ENCODE measurements at regions of chr9 and their contacts with region 1.

Region 1: GRCh38 chr9:2655411-2655901 is 33.9 kb downstream of the VLDLR start:
- DNase-seq: peak; percentile 40
- H3K4me3 Mint-ChIP-seq: peak overlapping the region; percentile 13
- H3K27ac Mint-ChIP-seq: peak overlapping the region; percentile 91
- H3K4me1 Mint-ChIP-seq: peaks cover 29% of the 10 kb centered on the region
- H3K27me3 Mint-ChIP-seq: no peaks in the 10 kb centered on the region

Region 2: GRCh38 chr9:2023532-2023931 is 631.9 kb before region 1 on chr9:
- intact Hi-C with region 1: loop called (anchors 5 kb)
- DNase-seq: peak; percentile 21
- H3K4me3 Mint-ChIP-seq: peak overlapping the region; percentile 71
- H3K27ac Mint-ChIP-seq: peak overlapping the region; percentile 90
- H3K4me1 Mint-ChIP-seq: peaks cover 93% of the 10 kb centered on the region
- H3K27me3 Mint-ChIP-seq: no peaks in the 10 kb centered on the region

Region 3: DNA sequence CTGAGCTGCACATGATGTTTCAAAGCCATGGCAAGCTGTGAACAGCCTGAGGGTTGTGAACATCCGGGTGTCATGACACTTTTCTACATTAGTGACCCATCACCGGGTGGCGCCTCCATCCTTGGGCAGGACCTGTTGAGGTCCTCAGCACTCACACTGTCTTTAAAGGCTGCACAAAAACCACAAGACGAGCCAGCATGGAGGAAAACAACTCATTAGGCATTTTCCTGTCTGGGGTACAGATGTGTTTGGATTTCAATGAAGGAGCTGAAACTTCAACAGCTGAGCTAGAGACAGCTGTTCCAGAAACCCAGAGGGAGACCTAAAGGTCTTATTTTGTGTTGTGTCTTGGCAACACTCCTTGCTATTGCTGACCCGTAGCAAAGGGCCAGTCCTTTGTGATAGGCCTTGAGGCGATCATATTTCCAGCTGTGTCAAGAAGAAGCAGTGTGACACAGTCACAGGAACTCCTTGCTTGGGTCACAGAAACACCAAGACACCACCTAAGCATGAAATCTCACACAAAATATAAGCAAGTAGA is 185.7 kb before region 1 on chr9:
- intact Hi-C with region 1: loop called (anchors 5 kb)
- DNase-seq: no peak
- H3K4me3 Mint-ChIP-seq: no peak overlapping the region
- H3K27ac Mint-ChIP-seq: no peak overlapping the region
- H3K4me1 Mint-ChIP-seq: peaks cover 2% of the 10 kb centered on the region
- H3K27me3 Mint-ChIP-seq: peaks cover 5% of the 10 kb centered on the region

Region 4: DNA sequence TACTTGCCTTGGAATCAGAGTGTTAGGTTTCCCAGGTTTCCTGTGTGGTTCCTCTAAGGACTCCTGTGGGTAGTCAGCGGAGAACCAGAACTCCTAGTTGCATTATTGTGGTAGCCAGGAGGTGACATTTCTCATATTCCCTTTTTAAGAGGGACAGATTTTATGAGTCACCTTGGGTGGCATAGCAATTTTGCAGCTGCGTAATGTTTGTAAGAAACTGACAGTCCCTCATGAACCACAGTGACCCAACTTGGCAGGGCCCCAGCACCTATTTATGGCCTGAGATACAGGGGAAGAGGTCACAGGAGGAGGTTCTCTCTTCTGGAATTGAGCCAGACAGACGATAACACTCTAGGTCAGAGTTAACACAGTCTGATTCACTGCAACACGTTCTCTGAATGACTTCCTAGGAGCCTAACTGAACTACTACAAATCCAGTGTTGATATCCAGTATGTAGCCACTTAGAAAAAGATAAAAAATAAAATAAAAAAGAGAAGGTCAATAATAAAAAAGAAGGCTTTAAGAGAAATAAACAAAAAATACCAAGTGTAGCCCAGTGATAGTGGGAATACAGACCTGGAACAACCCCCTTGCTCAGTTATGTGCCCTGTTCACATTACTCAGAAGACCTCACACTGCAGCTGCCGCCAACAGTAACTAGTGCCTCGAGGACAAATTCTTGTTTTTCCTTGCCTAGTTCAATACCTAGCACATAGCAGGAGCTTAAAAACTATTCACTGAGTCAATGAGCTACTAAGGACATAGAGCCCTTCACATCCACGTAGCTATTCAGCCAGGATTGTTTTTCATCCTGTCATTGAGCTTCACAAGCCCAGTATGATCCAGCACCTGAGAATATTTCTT is 84.6 kb before region 1 on chr9:
- intact Hi-C with region 1: no loop called
- DNase-seq: no peak
- H3K4me3 Mint-ChIP-seq: no peak overlapping the region
- H3K27ac Mint-ChIP-seq: no peak overlapping the region
- H3K4me1 Mint-ChIP-seq: no peaks in the 10 kb centered on the region
- H3K27me3 Mint-ChIP-seq: no peaks in the 10 kb centered on the region

Region 5: DNA sequence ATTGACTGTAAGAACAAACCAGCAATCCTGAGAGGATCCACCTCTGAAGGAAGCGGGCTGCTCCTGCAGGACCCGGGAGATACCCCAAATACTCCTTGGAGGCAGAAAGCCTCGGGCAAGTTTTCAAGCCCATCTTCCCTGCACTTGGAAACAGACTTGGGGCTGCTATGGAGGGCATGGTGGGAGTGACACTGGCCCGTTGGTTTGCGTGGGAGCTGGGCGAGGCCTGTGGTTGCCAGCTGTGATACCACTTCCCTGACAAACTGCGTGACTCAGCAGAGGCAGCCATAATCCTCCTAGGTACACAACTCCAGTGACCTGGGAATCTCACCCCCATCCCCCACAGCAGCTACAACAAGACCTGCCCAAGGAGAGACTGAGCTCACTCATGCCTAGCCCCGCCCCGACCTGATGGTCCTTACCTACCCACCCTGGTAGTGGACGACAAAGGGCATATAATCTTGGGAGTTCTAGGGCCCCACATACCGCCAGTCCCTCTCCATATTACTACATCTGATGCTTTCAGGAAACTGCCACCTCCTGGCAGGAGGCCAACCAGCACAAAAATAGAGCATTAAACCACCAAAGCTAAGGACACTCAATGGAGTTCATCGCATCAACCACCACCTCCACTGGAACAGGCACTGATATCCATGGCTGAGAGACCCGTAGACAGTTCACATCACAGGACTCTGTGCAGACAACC is 72.0 kb before region 1 on chr9:
- intact Hi-C with region 1: no loop called
- DNase-seq: no peak
- H3K4me3 Mint-ChIP-seq: no peak overlapping the region
- H3K27ac Mint-ChIP-seq: no peak overlapping the region
- H3K4me1 Mint-ChIP-seq: no peaks in the 10 kb centered on the region
- H3K27me3 Mint-ChIP-seq: peaks cover 5% of the 10 kb centered on the region

Region 6: GRCh38 chr9:2638871-2639673 is 16.4 kb before region 1 on chr9:
- intact Hi-C with region 1: loop called (anchors 1 kb)
- DNase-seq: no peak
- H3K4me3 Mint-ChIP-seq: no peak overlapping the region
- H3K27ac Mint-ChIP-seq: peak overlapping the region; percentile 69
- H3K4me1 Mint-ChIP-seq: peaks cover 35% of the 10 kb centered on the region
- H3K27me3 Mint-ChIP-seq: no peaks in the 10 kb centered on the region

Region 7: DNA sequence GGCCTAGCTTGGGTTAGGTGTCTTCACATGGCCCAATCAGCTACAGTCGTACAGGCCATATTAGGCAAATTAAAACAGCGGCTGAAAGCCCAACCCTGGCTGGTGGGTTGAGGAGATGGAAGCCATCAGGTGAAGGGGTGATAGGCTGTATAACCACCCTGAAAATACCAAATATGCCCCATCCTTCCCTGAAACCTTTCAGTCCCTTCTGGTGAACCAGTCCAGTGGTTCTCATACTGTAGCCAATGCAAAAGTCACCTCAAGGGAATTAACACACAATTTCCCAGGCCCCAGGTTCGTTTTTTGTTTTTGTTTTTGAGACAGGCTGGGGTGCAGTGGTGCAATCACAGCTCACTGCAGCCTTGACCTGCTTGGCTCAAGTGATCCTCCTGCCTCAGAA is 42.0 kb after region 1 on chr9:
- intact Hi-C with region 1: no loop called
- DNase-seq: no peak
- H3K4me3 Mint-ChIP-seq: no peak overlapping the region
- H3K27ac Mint-ChIP-seq: no peak overlapping the region
- H3K4me1 Mint-ChIP-seq: no peaks in the 10 kb centered on the region
- H3K27me3 Mint-ChIP-seq: no peaks in the 10 kb centered on the region

Region 8: GRCh38 chr9:2764353-2764752 is 108.9 kb after region 1 on chr9:
- intact Hi-C with region 1: loop called (anchors 1 kb)
- DNase-seq: peak; percentile 55
- H3K4me3 Mint-ChIP-seq: no peak overlapping the region
- H3K27ac Mint-ChIP-seq: peak overlapping the region; percentile 91
- H3K4me1 Mint-ChIP-seq: peaks cover 33% of the 10 kb centered on the region
- H3K27me3 Mint-ChIP-seq: no peaks in the 10 kb centered on the region